B cell (primary cell): ENCODE measurements at regions of chr9 and their contacts with region 1.

Region 1: GRCh38 chr9:99104459-99105151 is at the start of gene TGFBR1:
- DNase-seq: peak; percentile 96
- ATAC-seq: peak; percentile 83
- H3K4me3 ChIP-seq: peak within 1 kb of the TSS; percentile 64 to 87 (median 79)
- H3K4me3 Mint-ChIP-seq: peak within 1 kb of the TSS; percentile 97
- H3K27ac ChIP-seq: peak within 1 kb of the TSS; percentile 16 to 74
- H3K27ac Mint-ChIP-seq: peak within 1 kb of the TSS; percentile 89
- H3K4me1 ChIP-seq: peaks cover 40 to 44% of the 10 kb centered on the region in 2 donors
- H3K4me1 Mint-ChIP-seq: peaks cover 48% of the 10 kb centered on the region
- H3K27me3 ChIP-seq: no peaks in the 10 kb centered on the region
- H3K27me3 Mint-ChIP-seq: no peaks in the 10 kb centered on the region
- CTCF ChIP-seq: no peak
- total RNA-seq, gene TGFBR1: 60.7 TPM in 2 replicates

Region 2: DNA sequence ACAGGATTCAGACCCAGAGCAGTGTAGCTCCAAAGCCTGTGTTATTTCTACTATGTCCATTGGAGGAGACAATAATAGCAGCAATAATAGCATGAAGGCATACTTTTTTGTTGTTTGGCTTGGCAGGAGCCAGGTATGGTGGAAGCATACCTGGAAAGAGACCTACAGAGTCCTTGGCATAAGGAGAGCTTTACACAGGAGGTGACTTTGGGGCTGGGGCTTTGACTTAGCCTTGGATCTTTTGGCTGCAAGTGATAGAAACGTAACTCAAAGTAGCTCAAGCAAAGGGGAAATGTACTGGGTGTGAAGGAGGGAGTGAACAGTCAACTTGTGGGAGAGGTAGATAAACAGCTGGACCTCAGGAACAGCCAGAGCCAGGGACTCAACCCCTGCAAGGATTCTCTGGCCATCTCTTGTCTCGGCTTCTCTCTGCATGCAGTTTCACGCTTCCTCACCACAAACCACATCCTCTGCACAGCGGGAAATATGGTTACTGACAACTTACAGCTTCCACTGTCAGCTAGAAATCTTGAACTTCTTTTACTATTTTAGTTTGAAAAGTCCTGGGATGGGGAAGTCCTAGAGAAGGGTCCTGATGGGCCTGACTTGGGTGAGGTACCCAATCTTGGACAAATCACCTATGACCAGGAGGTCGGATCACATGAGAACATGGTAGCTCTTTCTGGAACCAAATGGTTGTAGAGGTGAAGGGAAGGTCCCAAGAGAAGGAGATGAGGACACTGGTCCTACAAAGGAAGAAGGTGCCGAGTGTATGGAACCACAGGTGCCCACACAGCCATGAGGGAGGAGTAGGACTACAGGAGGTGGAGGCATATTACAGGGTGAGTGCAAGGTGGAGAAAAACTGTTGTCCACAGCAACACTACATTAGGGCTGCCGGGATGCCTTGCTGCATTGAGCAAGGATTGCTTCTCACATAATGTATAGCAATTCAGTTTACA is 46.7 kb before region 1 on chr9:
- CTCF ChIA-PET with region 1: interaction called, 17 read pairs
- POLR2A ChIA-PET with region 1: interaction called, 13 read pairs
- intact Hi-C with region 1: loop called (anchors 1 kb)
- DNase-seq: peak; percentile 72
- ATAC-seq: peak; percentile 52
- H3K4me3 ChIP-seq: peak overlapping the region; percentile 13 to 55 (median 23)
- H3K4me3 Mint-ChIP-seq: peak overlapping the region; percentile 86
- H3K27ac ChIP-seq: peak overlapping the region; percentile 57 to 75
- H3K27ac Mint-ChIP-seq: peak overlapping the region; percentile 88
- H3K4me1 ChIP-seq: peaks cover 54 to 66% of the 10 kb centered on the region in 2 donors
- H3K4me1 Mint-ChIP-seq: peaks cover 64% of the 10 kb centered on the region
- H3K27me3 ChIP-seq: no peaks in the 10 kb centered on the region
- H3K27me3 Mint-ChIP-seq: no peaks in the 10 kb centered on the region
- CTCF ChIP-seq: no peak

Region 3: DNA sequence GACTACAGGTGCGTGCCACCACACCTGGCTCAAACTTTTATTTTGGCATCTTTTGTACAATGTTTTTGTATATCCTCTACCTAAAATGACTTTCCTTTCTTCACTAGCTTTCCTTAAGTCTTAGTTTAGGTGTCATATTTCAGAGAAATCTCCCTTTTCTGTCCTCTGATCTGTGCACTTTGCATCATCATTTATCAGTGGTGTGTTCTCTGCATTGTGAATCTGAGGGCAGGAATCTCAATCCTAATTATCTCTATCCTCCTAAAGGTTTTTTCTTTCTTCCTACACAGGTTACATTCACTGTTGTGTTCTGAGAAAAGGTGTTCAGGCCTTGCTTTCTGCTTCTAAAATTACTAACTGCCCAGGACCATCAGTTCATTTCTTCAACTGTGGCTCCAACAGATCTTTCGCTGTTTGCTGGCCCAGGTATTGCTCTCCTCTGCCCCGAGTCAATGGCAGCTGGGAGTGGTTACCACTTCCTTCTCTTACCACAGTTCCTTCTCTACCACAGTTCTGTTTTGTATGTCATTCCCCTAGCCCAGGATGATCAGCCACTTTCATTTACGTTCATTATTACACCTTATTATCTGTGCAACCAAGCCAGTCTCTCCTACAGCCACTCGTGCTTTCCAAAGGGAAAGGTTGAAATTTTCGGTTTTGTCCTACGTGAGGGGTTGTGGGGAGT is 14.3 kb after region 1 on chr9:
- CTCF ChIA-PET with region 1: interaction called, 8 read pairs
- POLR2A ChIA-PET with region 1: interaction called, 3 read pairs
- intact Hi-C with region 1: loop called (anchors 1 kb)
- DNase-seq: peak; percentile 73
- ATAC-seq: peak; percentile 91
- H3K4me3 ChIP-seq: peak overlapping the region; percentile 3 to 57 (median 45)
- H3K4me3 Mint-ChIP-seq: peak overlapping the region; percentile 59
- H3K27ac ChIP-seq: peak overlapping the region; percentile 21 to 73
- H3K27ac Mint-ChIP-seq: peak overlapping the region; percentile 88
- H3K4me1 ChIP-seq: peaks cover 36 to 43% of the 10 kb centered on the region in 2 donors
- H3K4me1 Mint-ChIP-seq: peaks cover 71% of the 10 kb centered on the region
- H3K27me3 ChIP-seq: no peaks in the 10 kb centered on the region
- H3K27me3 Mint-ChIP-seq: no peaks in the 10 kb centered on the region
- CTCF ChIP-seq: no peak